Endothelial cell of umbilical vein (primary cell): ENCODE measurements at regions of chr6 and their contacts with region 1.

Region 1: DNA sequence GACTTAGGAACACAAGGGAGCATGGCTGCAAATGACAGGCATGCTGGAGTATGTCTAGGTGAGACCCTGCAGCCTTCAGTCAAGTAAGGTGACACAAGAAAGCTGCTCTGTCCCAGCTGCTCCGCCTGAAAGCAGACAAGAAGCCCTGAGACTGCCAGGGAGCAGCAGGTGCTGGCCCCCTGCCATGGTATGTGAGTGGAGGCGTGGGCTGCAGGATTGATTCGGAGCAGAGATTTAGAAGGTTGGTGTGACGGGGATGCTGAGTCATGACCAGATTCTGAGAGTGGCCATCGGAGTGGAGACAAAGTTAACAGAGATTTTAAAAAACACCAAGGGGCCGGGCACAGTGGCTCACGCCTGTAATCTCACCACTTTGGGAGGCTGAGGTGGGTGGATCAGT is 17.8 kb downstream of the LRP11 start:
- DNase-seq: no peak
- H3K4me3 ChIP-seq: no peak overlapping the region
- H3K27ac ChIP-seq: no peak overlapping the region
- H3K4me1 ChIP-seq: peaks cover 12% of the 10 kb centered on the region
- H3K27me3 ChIP-seq: no peaks in the 10 kb centered on the region
- CTCF ChIP-seq: no peak
- POLR2A ChIP-seq: no peak

Region 2: GRCh38 chr6:149454386-149454848 is 391.9 kb before region 1 on chr6:
- CTCF ChIA-PET with region 1: no interaction called
- POLR2A ChIA-PET with region 1: no interaction called
- dilution Hi-C with region 1: no loop called
- intact Hi-C with region 1: no loop called
- DNase-seq: peak; percentile 26
- H3K4me3 ChIP-seq: no peak overlapping the region
- H3K27ac ChIP-seq: no peak overlapping the region
- H3K4me1 ChIP-seq: no peaks in the 10 kb centered on the region
- H3K27me3 ChIP-seq: peaks cover 26 to 42% of the 10 kb centered on the region in 2 experiments
- CTCF ChIP-seq: no peak
- POLR2A ChIP-seq: no peak

Region 3: DNA sequence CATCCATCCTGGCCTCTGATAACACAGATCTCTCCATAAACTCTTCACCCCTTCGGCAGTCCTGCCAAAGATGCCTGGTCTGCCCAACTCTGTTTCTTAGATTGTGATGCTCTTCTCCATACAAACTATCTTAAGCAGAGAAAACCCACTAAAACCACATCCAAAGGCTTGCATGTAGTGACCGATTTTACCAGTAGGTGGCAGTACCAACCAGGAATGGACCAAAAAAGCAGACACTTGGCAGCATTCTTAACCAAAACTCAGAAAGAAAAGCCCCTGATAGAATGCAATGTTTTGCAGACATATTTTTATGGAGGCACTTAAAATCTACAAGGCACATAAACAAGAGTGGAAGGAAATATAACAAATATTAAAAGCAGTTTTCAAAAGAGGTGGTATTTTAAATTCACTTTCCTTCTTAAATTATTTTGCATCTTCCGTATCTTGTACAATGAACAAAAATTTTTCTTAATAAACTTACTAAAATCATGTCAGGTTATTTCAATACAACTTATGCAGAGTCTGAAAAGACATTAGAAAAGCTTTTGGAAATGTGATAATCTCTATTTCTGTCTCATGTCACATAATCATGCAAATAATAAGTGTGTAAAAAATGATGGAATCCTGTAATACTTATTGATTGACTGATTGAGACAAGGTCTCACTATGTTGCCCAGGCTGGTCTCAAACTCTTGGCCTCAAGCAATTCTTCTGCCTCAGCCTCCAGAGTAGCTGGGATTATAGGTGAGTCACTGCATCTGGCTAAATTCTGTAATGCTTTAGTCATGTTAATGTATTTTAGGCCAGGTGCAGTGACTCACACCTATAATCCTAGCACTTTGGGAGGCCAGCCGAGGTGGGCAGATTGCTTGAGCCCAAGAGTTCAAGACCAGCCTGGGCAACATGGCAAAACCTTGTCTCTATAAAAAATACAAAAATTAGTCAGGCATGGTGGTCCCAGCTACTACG is 11.5 kb before region 1 on chr6:
- CTCF ChIA-PET with region 1: interaction called, 10 read pairs
- POLR2A ChIA-PET with region 1: no interaction called
- dilution Hi-C with region 1: no loop called
- intact Hi-C with region 1: no loop called
- DNase-seq: peak; percentile 80
- H3K4me3 ChIP-seq: no peak overlapping the region
- H3K27ac ChIP-seq: no peak overlapping the region
- H3K4me1 ChIP-seq: no peaks in the 10 kb centered on the region
- H3K27me3 ChIP-seq: no peaks in the 10 kb centered on the region
- CTCF ChIP-seq: peak; percentile 77
- POLR2A ChIP-seq: no peak